Activated CD4-positive, alpha-beta T cell treated with anti-CD3 and anti-CD28 coated beads, Interleukin-2, amount 10 ng/mL, durations not matched to agents 7 days and 5 days (primary cell): ENCODE measurements at regions of chr12 and their contacts with region 1.

Region 1: GRCh38 chr12:50222275-50222795 is 55.2 kb upstream of the CERS5 start:
- DNase-seq: peak; percentile 37
- H3K4me3 Mint-ChIP-seq: no peak overlapping the region
- H3K27ac Mint-ChIP-seq: no peak overlapping the region
- H3K4me1 Mint-ChIP-seq: peaks cover 34% of the 10 kb centered on the region
- H3K27me3 Mint-ChIP-seq: no peaks in the 10 kb centered on the region

Region 2: DNA sequence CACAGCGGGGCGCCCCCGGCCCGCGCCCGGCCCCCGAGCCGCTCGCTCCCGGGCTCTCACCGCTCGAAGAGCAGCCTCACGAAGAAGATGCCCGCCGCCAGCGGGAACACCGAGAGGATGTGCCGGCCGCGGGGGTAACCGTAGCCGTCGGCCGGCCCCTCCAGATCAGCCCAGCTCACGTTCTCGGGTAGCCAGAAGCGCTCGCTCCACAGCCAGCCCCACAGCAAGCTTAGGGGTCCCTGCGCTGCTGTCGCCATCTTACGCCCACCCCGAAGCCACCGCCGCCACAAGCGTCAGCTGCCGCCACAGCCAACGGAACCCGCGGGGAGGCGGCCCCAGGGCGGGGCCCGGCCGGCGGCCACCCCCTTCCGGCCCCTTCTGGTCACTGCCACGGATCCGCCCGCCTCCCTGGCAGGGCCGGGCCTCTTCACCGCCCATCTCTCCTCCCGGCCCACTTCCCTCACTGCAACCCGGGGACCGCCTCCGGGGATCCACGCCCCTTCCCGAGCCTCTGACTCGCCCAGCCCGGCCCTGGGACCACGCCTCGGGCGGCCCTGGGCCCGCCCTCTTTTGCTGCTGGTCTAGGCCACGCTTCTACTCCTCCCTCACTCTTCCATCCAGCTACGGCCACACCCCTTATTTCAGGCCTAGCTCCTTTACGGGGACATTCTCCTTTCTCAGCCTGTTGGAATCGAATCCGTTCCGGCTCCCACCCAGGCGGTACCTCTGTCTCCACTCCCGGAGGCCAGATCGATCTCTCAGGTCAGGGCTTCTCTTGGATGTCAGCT is 55.1 kb before region 1 on chr12 and contains the start of gene CERS5:
- CTCF ChIA-PET with region 1: no interaction called
- POLR2A ChIA-PET with region 1: interaction called, 15 read pairs
- DNase-seq: peak; percentile 98
- H3K4me3 Mint-ChIP-seq: peak within 1 kb of the TSS; percentile 86
- H3K27ac Mint-ChIP-seq: peak within 1 kb of the TSS; percentile 97
- H3K4me1 Mint-ChIP-seq: peaks cover 37% of the 10 kb centered on the region
- H3K27me3 Mint-ChIP-seq: no peaks in the 10 kb centered on the region
- total RNA-seq, gene CERS5: 49.2 to 59.2 TPM

Region 3: GRCh38 chr12:50242751-50243191 is 20.4 kb after region 1 on chr12:
- CTCF ChIA-PET with region 1: interaction called, 13 read pairs
- POLR2A ChIA-PET with region 1: no interaction called
- DNase-seq: no peak
- H3K4me3 Mint-ChIP-seq: no peak overlapping the region
- H3K27ac Mint-ChIP-seq: no peak overlapping the region
- H3K4me1 Mint-ChIP-seq: peaks cover 10% of the 10 kb centered on the region
- H3K27me3 Mint-ChIP-seq: no peaks in the 10 kb centered on the region